Thyroid gland (tissue), 4 donors: ENCODE measurements at regions of chr3 and their contacts with region 1.

Region 1: DNA sequence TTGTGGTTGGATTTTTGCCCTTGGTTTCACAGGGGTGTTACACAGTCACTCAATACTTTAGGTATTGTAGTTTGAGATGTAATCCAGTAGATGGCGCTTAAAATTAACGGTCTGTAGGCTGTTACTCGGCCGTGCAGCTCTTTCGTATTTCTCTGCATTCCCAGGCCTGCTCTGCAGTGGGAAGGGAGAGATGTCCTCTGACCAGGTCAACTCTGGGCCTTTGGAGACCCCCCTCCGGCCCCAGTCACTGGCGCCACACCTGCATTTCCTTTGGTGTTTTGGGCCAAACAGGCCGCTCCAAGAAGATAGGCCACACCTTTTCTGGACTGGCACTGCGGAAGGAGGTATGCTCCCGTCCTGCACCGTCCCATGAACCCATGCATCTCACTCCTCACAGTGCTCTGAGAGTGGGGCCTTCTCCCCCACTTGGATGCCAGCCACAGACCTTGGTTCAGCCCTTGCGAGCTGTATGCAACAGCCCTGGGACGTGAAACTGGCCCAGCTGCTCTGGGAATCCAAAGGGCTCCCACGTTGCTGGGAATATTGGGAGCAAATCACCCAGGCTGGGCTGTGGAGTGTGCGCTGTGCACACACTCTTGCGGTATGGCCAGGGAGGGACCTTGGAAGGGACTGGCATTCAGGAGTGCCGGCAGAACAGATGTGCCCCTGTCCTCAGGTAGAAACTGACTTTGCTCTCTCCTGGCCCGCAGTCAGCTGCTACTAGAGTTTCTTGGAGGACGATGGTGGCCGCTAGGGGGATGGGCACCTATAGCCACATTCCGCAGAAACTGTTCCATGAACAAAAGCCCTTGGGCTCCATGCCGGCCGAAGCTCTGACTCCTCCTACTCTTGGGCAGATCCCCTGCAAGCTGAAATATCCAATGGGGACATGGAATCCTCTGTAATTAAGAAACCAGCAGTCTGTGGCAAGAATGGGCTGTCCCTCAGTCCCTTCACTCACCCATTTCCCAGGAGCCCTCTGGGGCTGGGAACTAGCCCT is 410.5 kb upstream of the CADM2 start:
- DNase-seq: peak; percentile 6 to 18
- H3K4me3 ChIP-seq: no peak overlapping the region
- H3K27ac ChIP-seq: no peak overlapping the region
- H3K4me1 ChIP-seq: no peaks in the 10 kb centered on the region
- H3K27me3 ChIP-seq: no peaks in the 10 kb centered on the region
- CTCF ChIP-seq: peak in 5 of 6 experiments; percentile 18 to 58 (median 48)
- POLR2A ChIP-seq: no peak

Region 2: GRCh38 chr3:85360742-85361387 is 812.6 kb after region 1 on chr3:
- intact Hi-C with region 1: loop called (anchors 10 kb)
- DNase-seq: peak; percentile 30 to 53
- H3K4me3 ChIP-seq: no peak overlapping the region
- H3K27ac ChIP-seq: no peak overlapping the region
- H3K4me1 ChIP-seq: no peaks in the 10 kb centered on the region
- H3K27me3 ChIP-seq: no peaks in the 10 kb centered on the region
- CTCF ChIP-seq: peak in 3 of 6 experiments; percentile 45 to 60 (median 50)
- POLR2A ChIP-seq: no peak